SK-N-SH (cell line): ENCODE measurements at regions of chr19 and their contacts with region 1.

Region 1: DNA sequence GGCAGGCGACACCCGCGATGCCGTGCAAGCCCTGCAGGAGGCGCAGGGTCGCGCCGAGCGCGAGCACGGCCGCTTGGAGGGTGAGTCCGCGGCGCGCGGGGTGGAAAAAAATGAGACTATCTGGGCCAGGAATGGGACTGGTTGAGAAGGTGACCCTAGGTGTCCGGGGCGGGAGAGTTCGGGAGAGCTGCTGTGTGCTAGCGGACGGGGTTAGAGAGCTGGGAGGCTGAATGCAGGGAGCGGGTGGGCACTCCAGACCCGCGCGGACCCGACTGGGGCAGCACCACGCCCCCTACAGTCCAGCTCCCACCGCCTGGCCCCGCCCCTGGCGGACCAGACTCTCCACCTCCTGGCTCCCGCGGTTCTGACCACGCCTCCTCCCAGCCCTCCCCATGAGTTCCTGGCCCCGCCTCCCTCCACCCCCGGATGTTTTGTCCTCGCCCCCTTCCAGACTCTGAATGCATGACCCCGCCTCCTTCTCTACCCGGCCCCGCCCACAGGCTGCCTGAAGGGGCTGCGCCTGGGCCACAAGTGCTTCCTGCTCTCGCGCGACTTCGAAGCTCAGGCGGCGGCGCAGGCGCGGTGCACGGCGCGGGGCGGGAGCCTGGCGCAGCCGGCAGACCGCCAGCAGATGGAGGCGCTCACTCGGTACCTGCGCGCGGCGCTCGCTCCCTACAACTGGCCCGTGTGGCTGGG is 1.5 kb downstream of the CLEC11A start:
- DNase-seq: peak; percentile 100
- H3K4me3 ChIP-seq: peak overlapping the region; percentile 62 to 83
- H3K27ac ChIP-seq: peak overlapping the region; percentile 46 to 86; a peak in 3 of 4 replicates
- H3K4me1 ChIP-seq: peaks cover 0 to 21% of the 10 kb centered on the region in 2 experiments; a peak in 2 of 4 replicates
- H3K27me3 ChIP-seq: no peaks in the 10 kb centered on the region
- CTCF ChIP-seq: peak; percentile 83
- EP300 ChIP-seq: no peak
- RAD21 ChIP-seq: peak; percentile 55

Region 2: DNA sequence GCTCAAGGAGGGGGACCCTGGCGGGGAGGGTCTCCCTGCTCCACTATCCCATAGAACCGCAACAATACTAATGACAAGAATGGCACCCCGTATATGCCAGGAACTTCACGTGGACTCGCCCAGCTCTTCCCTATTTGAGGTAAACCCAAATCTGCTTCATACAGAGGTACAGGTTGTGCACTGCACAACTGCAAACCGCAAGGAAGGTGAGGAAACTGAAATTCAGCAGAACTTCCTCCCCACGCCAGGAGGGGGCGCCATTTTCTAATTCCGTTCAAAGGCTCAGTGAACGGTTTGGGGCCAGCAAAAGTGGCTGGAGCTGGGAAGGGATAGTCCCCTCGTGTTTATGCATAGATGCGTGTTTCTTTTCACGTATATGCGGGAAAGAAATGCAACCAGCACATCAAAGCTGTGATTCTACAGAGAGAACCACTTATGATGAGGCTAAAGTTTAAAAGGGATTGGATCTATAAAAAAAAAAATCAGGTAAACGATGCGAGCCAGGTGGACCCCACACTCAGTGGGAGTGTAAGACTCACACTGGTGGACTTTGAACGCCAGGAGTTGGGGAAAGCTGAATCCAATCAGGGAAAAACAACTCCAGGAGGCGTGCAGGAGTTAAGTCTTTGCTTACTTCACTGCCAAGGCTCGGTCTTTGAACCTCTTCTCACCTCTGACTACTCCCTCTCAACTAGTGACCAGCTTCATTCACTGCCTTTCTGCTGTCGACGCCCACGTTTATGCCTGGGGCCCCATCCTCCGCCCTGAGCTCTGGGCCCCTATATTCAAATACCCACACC is 55.2 kb before region 1 on chr19:
- CTCF ChIA-PET with region 1: interaction called, 20 read pairs
- POLR2A ChIA-PET with region 1: no interaction called
- DNase-seq: peak; percentile 78
- H3K4me3 ChIP-seq: no peak overlapping the region
- H3K27ac ChIP-seq: no peak overlapping the region
- H3K4me1 ChIP-seq: no peaks in the 10 kb centered on the region
- H3K27me3 ChIP-seq: no peaks in the 10 kb centered on the region
- CTCF ChIP-seq: peak; percentile 87
- EP300 ChIP-seq: no peak
- RAD21 ChIP-seq: peak; percentile 60

Region 3: DNA sequence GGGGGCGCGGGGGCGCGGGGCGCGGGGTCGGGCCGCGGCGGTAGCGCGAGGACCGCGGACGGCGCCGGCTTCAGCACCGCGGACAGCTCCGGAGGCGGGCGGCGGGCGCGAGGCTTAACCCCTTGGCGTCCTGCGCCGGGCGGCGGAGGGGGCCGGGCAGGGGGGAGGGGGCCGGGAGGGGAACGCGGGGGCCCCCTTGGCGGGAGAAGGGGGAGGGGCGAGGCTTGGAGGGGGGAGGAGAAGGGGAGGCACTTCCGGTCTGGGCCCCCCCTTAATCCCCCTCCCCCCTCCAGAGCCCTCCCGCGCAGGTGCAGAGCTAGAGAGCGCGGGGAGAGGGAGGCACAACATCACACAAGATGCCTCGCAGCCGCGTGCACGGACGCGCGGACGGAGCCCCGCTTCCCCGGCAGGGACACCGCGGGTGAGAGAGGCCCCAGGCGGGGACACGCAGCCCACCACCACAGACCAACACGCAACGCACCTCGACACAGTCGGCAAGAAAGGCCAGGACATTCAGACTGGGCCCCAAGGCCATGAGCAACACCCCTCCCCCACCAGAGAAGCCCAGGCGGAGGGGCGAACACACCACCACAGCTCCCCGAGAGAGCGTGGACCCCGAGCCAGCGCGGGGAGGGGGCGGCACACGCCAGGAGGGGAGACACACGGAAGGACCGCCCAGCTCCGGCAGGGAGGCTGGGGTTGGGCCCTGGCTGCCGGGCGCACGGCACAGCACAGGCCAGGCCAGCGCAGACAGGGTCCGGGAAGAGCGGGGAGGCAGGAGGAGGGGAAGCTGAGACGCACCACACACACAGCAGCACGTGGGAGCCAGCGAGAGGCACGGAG is 29.2 kb before region 1 on chr19:
- CTCF ChIA-PET with region 1: interaction called, 19 read pairs
- POLR2A ChIA-PET with region 1: interaction called, 5 read pairs
- DNase-seq: peak; percentile 97
- H3K4me3 ChIP-seq: peak overlapping the region in 1 of 2 experiments; percentile 43; a peak in 2 of 4 replicates
- H3K27ac ChIP-seq: peak overlapping the region in 1 of 2 experiments; percentile 90; a peak in 2 of 4 replicates
- H3K4me1 ChIP-seq: peaks cover 0 to 8% of the 10 kb centered on the region in 2 experiments; a peak in 1 of 4 replicates
- H3K27me3 ChIP-seq: peaks cover 19% of the 10 kb centered on the region
- CTCF ChIP-seq: no peak
- EP300 ChIP-seq: no peak
- RAD21 ChIP-seq: no peak